AG04449 (cell line): ENCODE measurements at regions of chr7 and their contacts with region 1.

Region 1: DNA sequence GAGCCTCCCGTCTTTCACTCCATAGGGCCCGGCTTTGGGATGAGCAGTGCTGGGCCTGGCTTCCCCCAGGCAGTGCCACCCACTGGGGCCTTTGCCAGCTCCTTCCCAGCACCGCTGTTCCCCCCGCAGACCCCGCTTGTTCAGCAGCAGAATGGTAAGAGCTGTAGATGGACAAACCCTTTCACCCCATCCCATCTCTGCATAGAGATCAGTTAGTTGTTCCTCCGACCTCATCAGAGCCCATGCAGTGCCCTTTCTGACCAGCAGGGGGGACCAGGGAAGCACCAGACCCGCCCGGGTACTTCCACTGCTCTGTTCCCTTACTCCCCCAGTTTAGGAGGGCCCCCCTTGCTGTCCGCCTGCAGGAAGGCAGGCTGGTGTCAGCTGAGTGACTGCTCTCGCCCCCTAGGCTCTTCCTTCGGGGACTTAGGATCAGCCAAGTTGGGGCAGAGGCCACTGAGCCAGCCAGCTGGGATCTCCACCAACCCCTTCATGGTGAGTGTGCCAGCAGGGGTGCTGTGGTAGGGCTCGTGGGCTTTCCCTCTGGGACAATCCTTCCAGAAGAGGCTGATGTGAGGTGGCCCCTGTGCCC is 9.8 kb downstream of the SAP25 start:
- DNase-seq: no peak
- H3K4me3 ChIP-seq: no peak overlapping the region
- CTCF ChIP-seq: peak; percentile 92

Region 2: GRCh38 chr7:100538654-100539435 is 25.1 kb before region 1 on chr7 and contains the start of gene AGFG2:
- CTCF ChIA-PET with region 1: interaction called, 396 read pairs
- POLR2A ChIA-PET with region 1: no interaction called
- DNase-seq: peak; percentile 92
- H3K4me3 ChIP-seq: peak within 1 kb of the TSS; percentile 79
- CTCF ChIP-seq: no peak

Region 3: GRCh38 chr7:100575746-100576383 is 12.0 kb after region 1 on chr7:
- CTCF ChIA-PET with region 1: interaction called, 138 read pairs
- POLR2A ChIA-PET with region 1: no interaction called
- DNase-seq: no peak
- H3K4me3 ChIP-seq: no peak overlapping the region
- CTCF ChIP-seq: no peak

Region 4: DNA sequence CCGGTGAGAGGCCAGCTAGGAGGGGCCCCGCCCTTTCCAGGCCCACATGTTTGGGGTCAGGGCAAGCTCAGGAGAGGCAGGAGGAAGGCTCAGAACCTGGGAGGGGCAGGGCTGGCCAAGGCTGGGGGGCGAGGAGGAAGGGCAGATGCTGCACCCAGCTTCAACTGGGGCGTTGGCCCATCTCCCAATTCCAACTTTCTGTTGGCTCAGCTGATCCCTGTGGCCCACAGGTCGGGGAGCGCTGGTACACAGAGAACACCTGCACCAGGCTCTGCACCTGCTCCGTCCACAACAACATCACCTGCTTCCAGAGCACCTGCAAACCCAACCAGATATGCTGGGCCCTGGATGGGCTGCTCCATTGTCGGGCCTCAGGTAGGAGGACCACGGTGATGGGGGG is 209.6 kb after region 1 on chr7:
- CTCF ChIA-PET with region 1: no interaction called
- POLR2A ChIA-PET with region 1: no interaction called
- DNase-seq: no peak
- H3K4me3 ChIP-seq: no peak overlapping the region
- CTCF ChIP-seq: no peak